Panc1 (cell line): ENCODE measurements at regions of chr12 and their contacts with region 1.

Region 1: DNA sequence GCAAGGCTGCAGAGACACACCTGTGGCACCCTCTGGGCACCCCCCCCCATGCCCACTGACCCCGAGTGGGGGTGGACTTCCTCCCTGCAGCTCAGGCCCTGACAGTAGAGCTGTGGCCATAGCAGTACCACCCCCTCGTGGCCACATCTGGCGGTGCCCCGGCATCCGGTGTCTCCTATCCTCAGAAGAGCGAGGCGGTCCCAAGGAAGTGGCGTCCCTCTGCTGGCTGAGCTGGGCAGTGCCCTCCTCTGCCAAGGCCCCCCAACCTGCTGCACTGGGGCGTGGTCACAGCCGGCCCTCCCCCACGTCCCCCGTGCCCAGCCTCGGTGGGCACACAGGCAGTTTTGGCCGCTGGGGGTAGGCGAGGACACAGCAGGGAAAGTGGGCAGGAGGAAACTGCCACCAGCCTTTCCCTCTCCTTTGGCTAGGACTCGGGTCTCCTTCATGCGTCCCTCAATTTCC is 6.0 kb upstream of the SLC6A12 start:
- DNase-seq: peak; percentile 17
- ATAC-seq: peak; percentile 94
- H3K4me3 ChIP-seq: no peak overlapping the region
- H3K27ac ChIP-seq: no peak overlapping the region
- H3K4me1 ChIP-seq: no peaks in the 10 kb centered on the region
- H3K27me3 ChIP-seq: no peaks in the 10 kb centered on the region
- CTCF ChIP-seq: peak; percentile 89

Region 2: DNA sequence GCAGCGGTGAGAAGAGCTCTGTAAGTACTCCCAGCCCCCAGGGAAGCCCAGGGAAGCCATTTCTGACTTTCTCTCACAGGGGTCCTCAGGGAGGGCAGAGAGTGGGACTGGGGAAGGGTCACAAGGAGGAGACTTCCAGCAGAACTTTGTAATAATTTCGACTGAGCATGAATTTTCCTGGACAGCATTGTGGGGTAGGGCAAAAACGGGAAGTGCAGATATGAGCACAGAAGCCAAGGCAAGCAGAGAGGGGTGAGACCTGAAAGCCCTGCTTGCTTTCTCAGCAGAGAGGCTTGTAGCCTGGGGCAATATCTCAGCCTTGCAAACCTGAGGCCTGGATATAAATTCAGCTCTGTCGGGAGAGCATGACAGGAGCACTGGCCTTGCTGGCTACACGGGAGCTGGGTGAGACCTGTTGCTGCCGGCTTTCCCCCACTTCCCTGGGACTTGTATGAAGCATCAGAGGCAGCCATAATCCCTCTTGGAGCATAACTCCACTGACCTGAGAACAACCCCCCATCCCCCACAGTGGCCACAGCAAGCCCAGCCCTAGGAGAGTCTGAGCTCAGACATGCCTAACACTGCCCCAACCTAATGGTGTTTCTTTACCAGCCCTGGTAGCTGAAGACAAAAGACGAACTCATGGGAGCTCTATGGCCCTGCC is 163.1 kb before region 1 on chr12:
- CTCF ChIA-PET with region 1: no interaction called
- POLR2A ChIA-PET with region 1: no interaction called
- in situ Hi-C with region 1: no loop called
- intact Hi-C with region 1: no loop called
- DNase-seq: no peak
- ATAC-seq: no peak; the same call in 1 of the 2 replicates
- H3K4me3 ChIP-seq: no peak overlapping the region
- H3K27ac ChIP-seq: no peak overlapping the region
- H3K4me1 ChIP-seq: no peaks in the 10 kb centered on the region
- H3K27me3 ChIP-seq: peaks cover 48% of the 10 kb centered on the region
- CTCF ChIP-seq: no peak

Region 3: GRCh38 chr12:356276-356988 is 136.5 kb after region 1 on chr12:
- CTCF ChIA-PET with region 1: no interaction called
- POLR2A ChIA-PET with region 1: interaction called, 20 read pairs
- in situ Hi-C with region 1: no loop called
- intact Hi-C with region 1: no loop called
- DNase-seq: no peak
- ATAC-seq: no peak
- H3K4me3 ChIP-seq: no peak overlapping the region
- H3K27ac ChIP-seq: no peak overlapping the region
- H3K4me1 ChIP-seq: no peaks in the 10 kb centered on the region
- H3K27me3 ChIP-seq: no peaks in the 10 kb centered on the region
- CTCF ChIP-seq: no peak